Spleen (tissue), 13 donors: ENCODE measurements at regions of chr16 and their contacts with region 1.

Region 1: DNA sequence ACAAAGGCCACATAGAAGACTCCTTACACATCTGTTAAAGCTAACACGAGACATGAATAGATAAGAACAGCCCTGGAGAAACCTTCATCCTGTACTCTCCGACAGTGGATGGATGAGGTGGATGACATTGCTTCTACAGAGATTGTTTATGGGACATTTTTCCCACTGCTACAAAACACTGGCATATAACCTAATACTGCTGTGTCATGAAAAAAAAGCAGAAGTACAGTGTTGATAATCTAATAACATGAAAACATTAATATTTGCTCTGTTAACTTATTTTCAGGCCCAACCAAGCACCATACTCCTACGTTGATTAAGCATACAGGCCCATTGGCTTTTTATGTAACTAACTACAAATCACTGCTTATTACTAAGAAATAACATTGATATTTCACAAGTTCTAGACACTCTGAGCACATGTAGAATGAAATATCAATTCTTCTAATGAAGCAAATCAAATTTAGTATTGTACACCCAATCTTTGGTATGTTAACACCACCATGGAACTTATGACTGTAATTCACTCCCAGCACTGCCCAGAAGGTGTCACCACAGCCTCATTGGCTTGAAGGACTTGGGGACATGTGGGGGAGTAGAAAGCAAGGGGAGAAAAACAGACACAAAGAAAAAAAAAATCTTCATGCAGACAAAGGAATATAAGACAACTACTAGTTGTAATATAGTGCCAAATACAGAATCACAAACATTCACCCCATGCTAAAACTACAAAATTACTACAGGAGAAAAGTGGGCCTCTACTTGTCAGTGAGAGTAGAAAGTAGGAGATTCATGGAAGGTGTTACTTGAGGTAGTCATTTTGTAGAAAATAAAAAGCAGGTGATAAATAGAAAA is 330.0 kb upstream of the PMFBP1 start:
- DNase-seq: no peak
- H3K4me3 ChIP-seq: no peak overlapping the region
- H3K27ac ChIP-seq: no peak overlapping the region
- H3K4me1 ChIP-seq: no peaks in the 10 kb centered on the region
- H3K27me3 ChIP-seq: no peaks in the 10 kb centered on the region
- CTCF ChIP-seq: peak; percentile 14 to 61 (median 49)
- POLR2A ChIP-seq: no peak

Region 2: DNA sequence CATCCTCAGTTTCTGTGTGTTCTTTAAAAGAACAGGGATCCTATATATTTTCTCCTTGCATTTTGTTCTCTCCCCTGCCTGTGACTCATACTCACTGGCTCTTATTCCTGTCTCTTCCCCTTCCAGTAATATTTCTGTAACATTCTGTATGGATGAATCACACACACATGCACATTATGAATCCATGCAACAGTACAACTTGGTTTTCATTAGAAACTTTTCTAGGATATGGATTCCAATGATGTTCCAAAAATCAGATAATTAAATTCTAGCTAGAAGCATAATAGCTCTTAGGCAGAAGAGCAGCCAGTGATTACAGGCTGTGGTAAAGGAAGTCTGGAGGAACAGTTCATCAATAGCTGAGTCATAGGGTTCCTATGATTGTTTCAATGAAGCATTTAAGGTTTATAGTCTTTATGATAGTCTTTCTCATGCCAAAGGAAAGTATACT is 210.4 kb before region 1 on chr16:
- intact Hi-C with region 1: no loop called
- DNase-seq: no peak
- H3K4me3 ChIP-seq: no peak overlapping the region
- H3K27ac ChIP-seq: no peak overlapping the region
- H3K4me1 ChIP-seq: no peaks in the 10 kb centered on the region
- H3K27me3 ChIP-seq: no peaks in the 10 kb centered on the region
- CTCF ChIP-seq: no peak
- POLR2A ChIP-seq: no peak

Region 3: DNA sequence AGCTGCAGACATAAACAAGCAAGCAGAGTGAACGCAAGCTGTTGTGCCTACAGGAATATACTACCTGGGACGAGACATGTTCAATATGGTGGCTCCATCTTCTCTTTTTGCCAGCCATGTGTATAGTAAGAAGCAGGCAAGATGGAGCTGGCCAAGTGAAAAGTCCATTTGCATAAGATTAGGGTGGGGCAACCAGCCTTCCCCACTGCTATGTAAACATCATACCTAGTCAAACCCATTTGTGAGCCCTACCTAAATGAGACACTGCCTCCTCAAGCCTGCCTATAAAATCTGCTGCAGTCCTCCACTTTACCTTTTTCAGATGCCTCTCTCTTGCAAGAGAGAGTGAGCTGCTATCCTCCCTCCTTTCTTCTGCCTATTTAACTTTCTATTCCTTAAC is 40.1 kb after region 1 on chr16:
- intact Hi-C with region 1: no loop called
- DNase-seq: no peak
- H3K4me3 ChIP-seq: no peak overlapping the region
- H3K27ac ChIP-seq: no peak overlapping the region
- H3K4me1 ChIP-seq: no peaks in the 10 kb centered on the region
- H3K27me3 ChIP-seq: no peaks in the 10 kb centered on the region
- CTCF ChIP-seq: no peak
- POLR2A ChIP-seq: no peak

Region 4: DNA sequence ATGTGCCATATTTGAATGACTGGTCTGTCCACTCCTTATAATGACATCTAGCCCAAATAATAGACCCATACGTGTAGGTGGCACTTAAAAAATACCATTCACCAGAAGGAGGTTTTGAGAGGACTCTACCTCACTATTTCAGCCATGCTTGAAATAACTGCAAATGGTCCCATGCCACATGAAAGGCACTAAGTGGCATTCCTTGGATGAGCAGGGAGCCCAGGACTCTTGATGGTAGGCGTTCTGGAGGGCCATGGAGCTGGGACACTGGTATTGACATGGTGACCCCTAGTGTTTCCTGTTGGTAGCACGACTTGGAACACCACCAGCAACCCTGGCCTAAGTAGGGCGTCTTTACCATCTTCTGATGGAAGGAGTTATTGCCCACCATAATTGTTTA is 694.7 kb after region 1 on chr16:
- intact Hi-C with region 1: loop called (anchors 10 kb)
- DNase-seq: no peak
- H3K4me3 ChIP-seq: no peak overlapping the region
- H3K27ac ChIP-seq: no peak overlapping the region
- H3K4me1 ChIP-seq: no peaks in the 10 kb centered on the region
- H3K27me3 ChIP-seq: no peaks in the 10 kb centered on the region
- CTCF ChIP-seq: peak in 9 of 11 experiments; percentile 20 to 69 (median 55)
- POLR2A ChIP-seq: no peak